HCT116 (cell line): ENCODE measurements at regions of chr14 and their contacts with region 1.

Region 1: DNA sequence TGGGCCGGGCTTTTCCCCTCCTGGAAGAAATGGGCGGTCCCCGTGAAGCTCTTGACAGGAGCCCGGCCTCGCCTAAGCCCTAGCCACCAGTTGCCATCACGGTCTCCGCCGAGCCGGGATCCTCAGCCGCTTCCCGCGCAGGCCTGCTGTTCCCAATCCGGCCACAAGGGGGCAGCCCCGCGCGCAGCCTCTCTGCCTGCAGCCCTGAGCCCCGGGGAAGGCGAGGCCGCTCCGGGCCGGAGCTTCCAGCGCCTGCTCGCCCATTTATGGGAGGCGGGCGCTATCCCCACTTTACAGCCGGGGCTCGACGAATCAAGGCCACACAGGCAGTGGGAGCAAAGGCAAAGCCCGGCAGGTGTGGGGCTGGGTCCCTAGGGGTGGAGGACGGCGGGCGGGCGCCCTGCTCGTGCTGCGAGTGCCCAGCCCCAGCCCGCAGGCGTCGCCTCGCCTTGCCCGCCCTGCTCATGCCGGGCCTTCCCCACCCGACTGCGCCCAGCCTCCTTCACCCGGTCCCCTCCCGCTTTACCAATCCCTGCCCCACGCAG is 61.5 kb downstream of the LGMN start:
- DNase-seq: peak; percentile 33
- ATAC-seq: peak; percentile 80
- H3K4me3 ChIP-seq: peak overlapping the region; percentile 43 to 58
- H3K27ac ChIP-seq: peak overlapping the region; percentile 93
- H3K4me1 ChIP-seq: peaks cover 9 to 32% of the 10 kb centered on the region in 2 experiments; a peak in 3 of 4 replicates
- H3K27me3 ChIP-seq: no peaks in the 10 kb centered on the region
- CTCF ChIP-seq: peak; percentile 82 to 98 (median 93)
- POLR2A ChIP-seq: no peak
- RAD21 ChIP-seq: peak; percentile 77

Region 2: GRCh38 chr14:92471919-92472318 is 215.1 kb before region 1 on chr14:
- CTCF ChIA-PET with region 1: no interaction called
- POLR2A ChIA-PET with region 1: no interaction called
- RAD21 ChIA-PET with region 1: no interaction called
- intact Hi-C with region 1: loop called (anchors 10 kb)
- DNase-seq: peak; percentile 62
- ATAC-seq: peak; percentile 93
- H3K4me3 ChIP-seq: no peak overlapping the region
- H3K27ac ChIP-seq: no peak overlapping the region; the same call in 1 of the 2 replicates
- H3K4me1 ChIP-seq: peaks cover 34 to 48% of the 10 kb centered on the region in 2 experiments
- H3K27me3 ChIP-seq: no peaks in the 10 kb centered on the region
- CTCF ChIP-seq: no peak
- POLR2A ChIP-seq: no peak
- RAD21 ChIP-seq: peak; percentile 20; the same call in 1 of the 2 replicates

Region 3: DNA sequence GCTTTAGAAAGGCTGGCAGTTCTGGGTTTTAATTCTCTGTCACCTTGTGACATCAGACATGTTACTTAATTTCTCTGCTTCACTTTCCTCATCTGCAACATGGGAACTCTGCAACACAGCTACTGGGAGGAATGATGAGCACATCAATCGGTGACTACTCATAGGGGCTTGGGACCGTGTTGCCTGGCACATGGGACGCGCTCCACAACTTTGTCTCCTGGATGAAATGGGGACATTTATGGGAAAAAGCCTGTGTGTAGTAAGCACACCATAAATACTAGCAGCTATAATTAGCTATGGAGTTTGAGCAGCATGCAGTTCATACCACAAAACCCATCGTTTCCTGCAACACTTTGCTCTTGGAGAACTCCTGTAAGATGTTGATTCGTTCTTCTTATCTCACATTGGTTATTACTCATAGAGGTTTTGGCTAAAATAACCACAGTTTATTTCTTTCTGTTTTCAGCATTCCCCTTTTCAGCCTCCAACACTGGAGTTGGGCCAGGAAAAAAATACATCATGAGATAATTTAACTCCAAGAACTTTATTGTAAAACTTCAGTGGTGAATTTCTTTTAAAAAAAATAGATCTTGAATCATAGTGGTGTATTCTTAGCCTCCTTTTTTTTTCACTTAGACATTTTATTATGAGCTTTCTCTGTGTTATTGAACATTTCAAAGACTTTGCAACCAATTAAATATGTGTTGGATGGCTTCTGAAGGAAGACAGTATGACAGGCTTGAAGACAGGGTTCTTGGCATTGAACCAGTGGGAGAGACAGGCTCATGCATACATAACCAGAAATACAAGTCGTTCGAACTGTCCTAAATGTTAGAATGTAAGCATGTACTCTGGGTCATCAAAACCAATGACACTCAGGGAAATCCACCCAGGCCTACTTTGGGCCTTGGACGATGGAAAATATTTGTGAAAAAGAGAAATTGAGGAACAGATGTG is 100.7 kb before region 1 on chr14:
- CTCF ChIA-PET with region 1: no interaction called
- POLR2A ChIA-PET with region 1: no interaction called
- RAD21 ChIA-PET with region 1: no interaction called
- intact Hi-C with region 1: loop called (anchors 10 kb)
- DNase-seq: no peak
- ATAC-seq: no peak
- H3K4me3 ChIP-seq: no peak overlapping the region
- H3K27ac ChIP-seq: no peak overlapping the region
- H3K4me1 ChIP-seq: peaks cover 0 to 3% of the 10 kb centered on the region in 2 experiments; a peak in 1 of 4 replicates
- H3K27me3 ChIP-seq: no peaks in the 10 kb centered on the region
- CTCF ChIP-seq: no peak
- POLR2A ChIP-seq: no peak
- RAD21 ChIP-seq: no peak

Region 4: DNA sequence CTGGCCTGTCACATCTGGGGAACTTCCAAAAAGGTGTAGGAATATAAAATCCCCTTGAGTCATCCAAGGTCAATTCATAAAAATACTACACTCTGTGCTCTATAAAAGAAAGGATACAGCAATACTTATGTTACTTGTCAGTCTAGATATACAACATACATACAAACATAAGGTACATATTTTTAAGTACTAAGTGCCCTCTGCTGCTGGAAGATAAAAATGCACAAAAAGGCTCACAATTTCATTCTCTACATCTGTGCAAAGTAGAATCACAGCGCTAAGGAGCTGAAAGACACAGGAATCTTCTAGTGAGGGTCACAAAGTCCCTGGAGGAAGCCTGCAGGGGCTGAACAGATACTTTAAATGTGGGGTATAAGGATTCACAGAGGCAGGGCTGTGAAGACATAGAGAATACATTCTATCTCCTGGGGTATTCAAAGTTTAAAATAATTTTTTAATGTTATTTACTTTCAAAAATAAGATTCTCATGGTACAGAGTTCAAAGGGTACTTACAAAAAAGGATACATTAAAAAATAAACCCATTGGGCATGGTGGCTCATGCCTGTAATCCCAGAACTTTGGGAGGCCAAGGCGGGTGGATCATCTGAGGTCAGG is 97.0 kb after region 1 on chr14:
- CTCF ChIA-PET with region 1: interaction called, 19 read pairs
- POLR2A ChIA-PET with region 1: no interaction called
- RAD21 ChIA-PET with region 1: interaction called in 1 of 2 experiments, 4 read pairs
- intact Hi-C with region 1: loop called (anchors 10 kb)
- DNase-seq: peak; percentile 62
- ATAC-seq: peak; percentile 73
- H3K4me3 ChIP-seq: no peak overlapping the region
- H3K27ac ChIP-seq: no peak overlapping the region
- H3K4me1 ChIP-seq: peaks cover 6 to 29% of the 10 kb centered on the region in 2 experiments
- H3K27me3 ChIP-seq: no peaks in the 10 kb centered on the region
- CTCF ChIP-seq: peak; percentile 41 to 90 (median 62); a peak in 5 of 6 replicates
- POLR2A ChIP-seq: no peak
- RAD21 ChIP-seq: peak; percentile 87